Activated CD8-positive, alpha-beta T cell treated with anti-CD3 and anti-CD28 coated beads for 36 hours (primary cell): ENCODE measurements at regions of chr17 and their contacts with region 1.

Region 1: DNA sequence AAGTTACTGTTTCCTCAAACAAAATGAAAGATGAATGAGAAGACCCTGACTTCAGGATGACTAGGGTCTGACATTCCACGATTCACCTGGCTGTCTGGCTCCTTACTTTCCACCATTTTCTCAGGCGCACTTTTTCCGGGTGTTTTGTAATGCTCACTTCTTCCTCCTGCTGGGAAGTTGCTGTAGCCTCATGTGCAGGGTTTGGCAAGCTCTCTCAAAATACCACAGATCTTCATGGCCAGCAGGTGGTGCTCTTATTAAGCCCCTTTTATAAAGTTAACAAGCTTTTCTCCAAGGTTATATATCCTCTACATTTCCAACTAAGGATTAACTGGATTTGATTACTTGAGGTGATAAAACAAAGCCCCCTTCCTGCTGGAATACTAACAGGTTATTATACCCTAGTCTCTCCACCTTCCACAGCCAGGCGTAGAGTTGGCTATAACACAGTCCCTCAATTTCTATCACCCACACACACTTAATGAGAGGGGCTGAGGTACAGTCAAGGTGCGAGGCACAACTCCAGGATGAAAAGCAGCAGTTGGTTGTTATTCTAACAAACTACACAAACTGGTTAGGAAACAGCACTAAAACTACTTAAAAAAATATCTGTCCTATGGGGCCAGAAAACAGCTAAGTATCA is 45.4 kb downstream of the STH start:
- DNase-seq: peak; percentile 75
- ATAC-seq: peak; percentile 52
- H3K4me3 Mint-ChIP-seq: no peak overlapping the region
- H3K27ac Mint-ChIP-seq: peak overlapping the region; percentile 71
- H3K4me1 Mint-ChIP-seq: peaks cover 31% of the 10 kb centered on the region
- H3K27me3 Mint-ChIP-seq: no peaks in the 10 kb centered on the region
- CTCF ChIP-seq: peak; percentile 76

Region 2: DNA sequence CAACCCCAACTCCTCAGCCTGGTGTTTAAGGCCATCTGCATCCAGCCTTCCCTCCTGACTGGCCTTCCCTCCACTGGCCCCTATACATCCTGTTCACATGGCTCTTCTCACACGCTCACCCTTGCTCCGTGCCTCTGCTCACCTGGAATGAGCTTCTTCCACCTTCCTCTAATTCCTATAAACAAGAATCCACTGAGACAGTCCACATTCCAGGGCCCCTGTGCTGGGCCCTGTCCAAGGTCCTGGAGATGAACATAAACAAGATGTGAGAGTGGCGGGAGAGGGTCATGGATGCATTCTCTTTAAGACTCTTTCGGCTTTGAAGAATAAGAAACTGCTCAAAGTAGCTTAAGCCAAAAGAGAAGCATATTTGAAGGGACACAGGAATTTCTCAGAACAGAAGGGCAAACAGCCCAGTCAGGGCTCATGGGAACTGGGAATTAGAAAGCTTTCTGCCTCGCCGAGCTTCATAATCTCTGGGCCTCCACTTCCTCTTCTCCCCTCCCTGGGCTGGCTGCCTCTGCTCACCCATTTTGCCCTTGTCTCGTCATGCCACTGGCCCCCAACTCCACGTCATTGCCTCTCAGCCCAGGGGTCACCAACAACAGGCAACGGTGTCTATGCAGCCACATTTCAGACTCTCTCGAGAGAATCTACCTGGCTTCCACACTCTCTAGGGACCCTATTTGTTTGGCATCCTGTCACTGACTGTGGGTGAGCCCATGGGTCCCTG is 186.3 kb before region 1 on chr17:
- CTCF ChIA-PET with region 1: no interaction called
- POLR2A ChIA-PET with region 1: no interaction called
- intact Hi-C with region 1: no loop called
- DNase-seq: peak; percentile 22
- ATAC-seq: no peak
- H3K4me3 Mint-ChIP-seq: no peak overlapping the region
- H3K27ac Mint-ChIP-seq: no peak overlapping the region
- H3K4me1 Mint-ChIP-seq: no peaks in the 10 kb centered on the region
- H3K27me3 Mint-ChIP-seq: peaks cover 24% of the 10 kb centered on the region
- CTCF ChIP-seq: no peak

Region 3: GRCh38 chr17:46002311-46002972 is 42.0 kb before region 1 on chr17:
- CTCF ChIA-PET with region 1: interaction called, 21 read pairs
- POLR2A ChIA-PET with region 1: no interaction called
- intact Hi-C with region 1: no loop called
- DNase-seq: peak; percentile 84
- ATAC-seq: peak; percentile 99
- H3K4me3 Mint-ChIP-seq: no peak overlapping the region
- H3K27ac Mint-ChIP-seq: no peak overlapping the region
- H3K4me1 Mint-ChIP-seq: no peaks in the 10 kb centered on the region
- H3K27me3 Mint-ChIP-seq: no peaks in the 10 kb centered on the region
- CTCF ChIP-seq: peak; percentile 85

Region 4: DNA sequence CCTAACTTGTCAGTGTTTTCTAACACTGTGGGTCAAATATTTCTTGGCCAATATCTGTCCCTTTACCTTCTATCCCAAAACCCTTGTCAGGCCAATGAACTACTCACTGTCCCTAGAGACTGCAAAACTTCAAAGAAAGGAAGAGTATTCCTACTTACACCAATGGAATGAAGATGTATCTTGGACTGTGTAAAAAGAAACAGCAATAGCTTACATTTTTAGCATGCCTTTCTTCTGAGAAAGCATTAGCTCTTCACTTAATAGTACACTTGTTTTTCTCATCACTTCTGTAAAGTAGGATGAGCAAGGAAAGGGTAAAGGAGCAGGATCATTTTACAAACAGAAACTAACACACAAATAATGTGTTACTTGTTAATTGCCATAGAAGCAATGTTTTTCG is 28.6 kb after region 1 on chr17:
- CTCF ChIA-PET with region 1: interaction called, 10 read pairs
- POLR2A ChIA-PET with region 1: no interaction called
- intact Hi-C with region 1: no loop called
- DNase-seq: no peak
- ATAC-seq: no peak
- H3K4me3 Mint-ChIP-seq: no peak overlapping the region
- H3K27ac Mint-ChIP-seq: no peak overlapping the region
- H3K4me1 Mint-ChIP-seq: peaks cover 51% of the 10 kb centered on the region
- H3K27me3 Mint-ChIP-seq: no peaks in the 10 kb centered on the region
- CTCF ChIP-seq: no peak

Region 5: DNA sequence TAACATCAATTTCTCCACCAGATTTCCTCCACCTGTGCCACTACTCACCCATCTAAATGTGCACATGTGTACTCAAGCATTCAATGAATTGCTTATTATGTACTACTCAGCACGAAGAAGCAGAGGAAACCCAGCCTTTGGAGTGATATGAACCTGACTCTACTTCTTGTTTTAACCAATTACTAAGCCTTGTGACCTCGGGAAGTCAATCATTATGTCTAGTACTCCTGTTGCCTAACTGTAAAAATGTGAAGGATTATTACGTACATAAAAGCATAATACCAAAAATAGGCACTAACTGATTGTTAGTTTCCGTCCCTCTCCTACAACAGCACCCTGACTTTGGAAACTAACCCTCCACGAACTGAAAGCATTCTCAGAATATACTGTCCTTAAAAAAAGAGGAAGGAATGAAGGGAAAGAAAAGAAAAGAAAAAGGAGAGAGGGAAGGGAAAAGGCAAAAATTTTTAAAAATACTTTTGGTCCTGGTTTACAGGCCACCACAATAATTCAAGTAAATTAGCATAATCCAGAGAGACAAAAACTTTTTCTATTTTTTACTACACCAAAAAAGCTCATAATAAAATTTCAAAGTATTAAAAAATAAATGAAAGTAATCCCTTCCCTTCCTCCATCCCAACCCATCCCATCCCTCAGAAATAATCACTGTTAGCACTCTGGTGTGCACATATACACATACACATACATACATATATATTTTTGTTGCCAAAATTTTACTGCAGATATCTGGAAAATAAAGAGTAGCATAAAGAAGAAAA is 95.2 kb after region 1 on chr17:
- CTCF ChIA-PET with region 1: interaction called, 17 read pairs
- POLR2A ChIA-PET with region 1: no interaction called
- intact Hi-C with region 1: no loop called
- DNase-seq: no peak
- ATAC-seq: no peak
- H3K4me3 Mint-ChIP-seq: no peak overlapping the region
- H3K27ac Mint-ChIP-seq: no peak overlapping the region
- H3K4me1 Mint-ChIP-seq: peaks cover 87% of the 10 kb centered on the region
- H3K27me3 Mint-ChIP-seq: no peaks in the 10 kb centered on the region
- CTCF ChIP-seq: no peak

Region 6: GRCh38 chr17:46193626-46194392 is 149.4 kb after region 1 on chr17:
- CTCF ChIA-PET with region 1: interaction called, 9 read pairs
- POLR2A ChIA-PET with region 1: interaction called, 7 read pairs
- intact Hi-C with region 1: loop called (anchors 5 kb)
- DNase-seq: peak; percentile 94
- ATAC-seq: peak; percentile 81
- H3K4me3 Mint-ChIP-seq: peak overlapping the region; percentile 81
- H3K27ac Mint-ChIP-seq: peak overlapping the region; percentile 99
- H3K4me1 Mint-ChIP-seq: peaks cover 51% of the 10 kb centered on the region
- H3K27me3 Mint-ChIP-seq: no peaks in the 10 kb centered on the region
- CTCF ChIP-seq: no peak